Heart left ventricle (tissue), 16 donors: ENCODE measurements at regions of chr9 and their contacts with region 1.

Region 1: DNA sequence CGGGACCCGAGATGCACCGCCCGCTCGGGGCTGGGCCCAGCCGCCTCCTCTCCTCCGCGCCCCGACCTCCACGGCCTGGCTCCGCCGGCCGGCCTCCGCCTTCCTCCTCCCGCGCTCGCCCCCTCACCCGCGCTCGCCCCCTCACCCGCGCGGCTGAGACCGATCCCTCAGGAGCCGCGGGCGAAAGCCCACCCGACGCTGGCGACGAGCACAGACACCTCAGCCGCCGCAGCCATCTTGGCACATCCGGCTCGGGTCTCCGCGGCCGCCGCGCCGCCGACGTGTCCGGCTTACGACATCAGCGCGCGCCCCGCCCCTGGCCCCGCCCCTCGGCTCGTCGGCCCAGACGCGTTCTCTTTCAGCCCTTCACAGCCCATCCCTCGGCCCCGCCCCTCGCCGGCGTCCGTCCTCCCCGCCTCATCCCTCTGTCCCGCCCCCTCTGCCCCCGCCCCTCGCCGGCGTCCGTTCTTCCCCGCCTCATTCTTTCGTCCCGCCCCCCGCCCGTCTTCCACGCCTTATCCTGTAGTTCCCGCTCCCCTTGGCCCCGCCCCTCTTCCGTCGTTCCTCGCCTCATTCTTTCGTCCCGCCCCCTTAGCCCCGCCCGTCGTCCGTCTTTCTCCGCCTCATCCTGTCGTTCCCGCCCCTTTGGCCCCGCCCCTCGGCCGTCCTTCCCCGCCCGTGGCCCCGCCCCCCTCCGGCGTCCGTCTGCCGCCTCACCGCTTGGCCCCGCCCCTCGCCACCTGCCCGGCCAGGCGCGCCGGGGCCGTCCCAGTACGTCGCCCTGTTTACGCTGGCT is at the start of gene SEC16A:
- DNase-seq: peak; percentile 99 to 100 (median 100)
- ATAC-seq: peak; percentile 83 to 92 (median 86)
- H3K4me3 ChIP-seq: peak within 1 kb of the TSS; percentile 72 to 100 (median 94)
- H3K27ac ChIP-seq: peak within 1 kb of the TSS; percentile 92 to 100 (median 99)
- H3K4me1 ChIP-seq: peaks cover 13 to 36% (median 26%) of the 10 kb centered on the region in 12 donors
- H3K27me3 ChIP-seq: no peaks in the 10 kb centered on the region
- CTCF ChIP-seq: no peak
- POLR2A ChIP-seq: peak; percentile 80 to 82
- total RNA-seq, gene SEC16A: 21.1 to 53.3 (median 30.2) TPM

Region 2: DNA sequence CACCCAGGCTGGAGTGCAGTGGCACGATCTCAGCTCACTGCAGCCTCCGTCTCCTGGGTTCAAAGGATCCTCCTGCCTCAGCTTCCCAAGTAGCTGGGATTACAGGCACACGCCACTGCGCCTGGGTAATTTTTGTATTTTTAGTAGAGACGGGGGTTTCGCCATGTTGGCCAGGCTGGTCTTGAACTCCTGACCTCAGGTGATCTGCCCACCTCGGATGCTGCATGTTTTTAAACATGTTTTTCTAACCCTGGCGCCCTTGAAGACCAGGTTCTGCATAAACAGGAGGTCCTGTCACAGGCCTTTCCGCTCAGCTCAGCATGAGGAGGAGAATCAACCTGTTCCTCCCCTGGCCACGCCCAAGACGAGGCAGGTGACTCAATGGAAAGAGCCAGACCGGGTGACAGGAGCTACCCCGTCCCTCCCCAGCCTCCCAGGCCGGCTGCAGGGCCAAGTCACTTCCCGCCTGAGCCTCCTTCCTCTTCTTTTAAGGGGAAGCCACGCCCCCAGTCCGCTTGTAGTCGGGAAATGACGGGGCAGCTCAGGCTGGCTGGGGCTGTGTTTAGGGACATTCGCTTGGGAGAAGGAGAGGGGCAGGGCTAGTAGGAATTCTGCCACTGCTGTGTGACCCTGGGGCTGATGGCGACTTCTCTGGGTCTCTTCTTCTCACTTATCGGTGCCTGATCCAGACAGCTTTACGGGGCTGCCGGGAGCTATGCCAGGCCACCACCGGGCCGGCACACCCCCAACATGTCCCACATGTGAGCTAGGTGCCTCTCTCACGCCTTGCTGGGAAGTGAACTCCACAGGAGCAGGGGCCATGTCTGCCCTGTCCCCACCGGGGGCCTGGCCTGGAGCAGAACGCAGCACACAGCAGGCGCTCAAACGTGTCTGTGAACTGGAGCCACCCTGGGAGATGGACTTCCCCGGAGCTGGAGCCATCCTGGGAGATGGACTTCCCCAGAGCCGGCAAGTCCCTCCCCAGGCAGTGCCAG is 56.7 kb after region 1 on chr9:
- intact Hi-C with region 1: loop called in 7 of 10 experiments (anchors 5 to 10 kb)
- DNase-seq: peak; percentile 94 to 96 (median 94)
- ATAC-seq: peak; percentile 77 to 89 (median 82)
- H3K4me3 ChIP-seq: peak overlapping the region in 9 of 12 donors; percentile 27 to 51 (median 41)
- H3K27ac ChIP-seq: peak overlapping the region; percentile 66 to 97 (median 86)
- H3K4me1 ChIP-seq: peaks cover 26 to 94% (median 77%) of the 10 kb centered on the region in 12 donors
- H3K27me3 ChIP-seq: no peaks in the 10 kb centered on the region
- CTCF ChIP-seq: no peak
- POLR2A ChIP-seq: peak in 1 of 2 donors; percentile 55

Region 3: DNA sequence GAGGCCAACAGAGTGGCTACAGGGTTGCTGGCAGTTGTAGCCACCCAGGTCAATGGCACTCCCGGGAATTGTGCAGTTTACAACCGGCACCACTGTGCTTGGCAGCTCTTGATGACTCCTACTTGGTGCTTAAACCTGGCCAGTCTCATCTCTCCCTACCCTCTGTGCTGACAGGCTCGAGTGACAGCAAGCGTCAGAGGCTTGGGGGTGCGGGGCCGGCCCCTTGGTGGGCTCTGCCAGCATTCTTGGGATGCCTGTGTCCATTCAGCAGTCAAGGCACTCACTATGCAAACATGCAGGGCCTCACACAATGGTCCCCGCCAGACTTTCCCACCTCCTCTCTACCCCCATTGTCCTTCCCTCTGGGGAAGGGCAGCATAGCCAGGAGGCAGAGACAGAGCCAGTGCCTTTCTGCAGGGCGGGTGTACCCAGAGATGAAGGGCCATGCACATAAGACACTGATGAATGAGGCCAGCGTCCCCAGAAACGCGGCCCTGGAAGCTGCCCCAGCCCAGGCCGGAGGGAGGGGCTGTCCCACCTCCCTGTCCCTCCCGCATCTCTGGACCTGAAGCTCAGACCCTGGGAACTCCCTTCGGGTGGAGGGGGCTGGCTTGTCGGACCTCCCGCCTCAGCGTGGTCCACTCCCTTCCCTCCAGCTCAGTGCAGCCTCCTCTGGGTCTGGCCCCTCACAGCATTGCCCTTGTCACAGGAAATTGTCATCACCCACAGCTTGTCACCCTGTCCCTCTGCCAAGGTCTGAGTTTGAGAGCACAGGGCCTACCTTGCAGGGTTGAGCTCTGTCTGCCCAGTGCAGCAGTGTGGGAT is 89.2 kb after region 1 on chr9:
- intact Hi-C with region 1: loop called in 1 of 10 experiments (anchors 1 kb)
- DNase-seq: peak; percentile 71 to 89 (median 83)
- ATAC-seq: peak; percentile 80 to 87 (median 84)
- H3K4me3 ChIP-seq: no peak overlapping the region
- H3K27ac ChIP-seq: peak overlapping the region; percentile 14 to 96 (median 74)
- H3K4me1 ChIP-seq: peaks cover 22 to 73% (median 50%) of the 10 kb centered on the region in 12 donors
- H3K27me3 ChIP-seq: no peaks in the 10 kb centered on the region
- CTCF ChIP-seq: no peak
- POLR2A ChIP-seq: no peak

Region 4: DNA sequence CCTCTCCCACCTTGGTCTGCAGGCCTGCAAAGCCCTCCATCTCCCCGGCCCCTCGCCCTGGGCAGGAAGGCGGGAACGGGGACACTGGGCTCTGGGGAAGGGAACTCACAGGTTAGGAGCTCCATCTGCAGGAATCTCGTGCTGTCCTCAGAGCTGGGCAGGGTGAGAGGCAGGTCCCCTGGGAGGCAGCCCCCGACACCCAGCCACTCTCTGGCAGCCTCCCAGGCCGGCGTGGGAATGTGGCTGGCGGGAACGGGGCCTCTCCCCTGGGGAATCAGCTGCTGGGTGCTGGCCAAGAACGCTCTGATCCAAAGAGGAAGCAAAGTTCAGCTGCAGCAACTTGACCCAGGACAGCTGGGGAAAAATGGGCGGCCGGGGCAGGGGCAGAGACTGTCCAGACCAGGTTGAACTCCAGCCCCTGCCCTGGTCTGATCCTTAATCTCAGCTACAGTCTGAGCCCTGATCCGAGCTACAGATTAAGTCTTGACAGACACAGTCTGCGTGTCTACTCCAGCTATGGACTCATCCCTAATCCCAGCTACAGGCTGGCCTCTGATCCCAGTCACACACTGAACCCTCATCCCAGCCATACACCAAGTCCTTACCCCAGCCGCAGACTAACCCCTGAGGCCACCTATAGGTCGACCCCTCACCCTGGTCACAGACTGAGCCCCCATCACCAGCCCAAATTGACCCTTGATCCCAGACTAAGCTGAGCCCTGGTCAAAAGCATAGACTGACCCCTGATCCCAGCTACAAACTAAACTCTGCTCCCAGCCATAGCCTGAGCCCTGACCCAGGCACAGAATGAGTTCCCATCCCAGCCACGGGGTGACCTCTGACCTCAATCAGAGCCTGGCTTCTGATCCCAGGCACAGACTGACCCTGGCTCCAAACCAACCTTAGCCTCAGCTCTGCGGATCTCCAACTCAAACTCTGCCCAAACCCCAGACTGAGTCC is 142.4 kb after region 1 on chr9:
- intact Hi-C with region 1: loop called in 6 of 10 experiments (anchors 1 to 2 kb)
- DNase-seq: peak; percentile 90 to 93 (median 91)
- ATAC-seq: peak; percentile 75 to 88 (median 83)
- H3K4me3 ChIP-seq: no peak overlapping the region
- H3K27ac ChIP-seq: peak overlapping the region in 11 of 12 donors; percentile 26 to 75 (median 54)
- H3K4me1 ChIP-seq: peaks cover 8 to 49% (median 36%) of the 10 kb centered on the region in 12 donors
- H3K27me3 ChIP-seq: no peaks in the 10 kb centered on the region
- CTCF ChIP-seq: peak; percentile 30 to 81 (median 63)
- POLR2A ChIP-seq: no peak

Region 5: DNA sequence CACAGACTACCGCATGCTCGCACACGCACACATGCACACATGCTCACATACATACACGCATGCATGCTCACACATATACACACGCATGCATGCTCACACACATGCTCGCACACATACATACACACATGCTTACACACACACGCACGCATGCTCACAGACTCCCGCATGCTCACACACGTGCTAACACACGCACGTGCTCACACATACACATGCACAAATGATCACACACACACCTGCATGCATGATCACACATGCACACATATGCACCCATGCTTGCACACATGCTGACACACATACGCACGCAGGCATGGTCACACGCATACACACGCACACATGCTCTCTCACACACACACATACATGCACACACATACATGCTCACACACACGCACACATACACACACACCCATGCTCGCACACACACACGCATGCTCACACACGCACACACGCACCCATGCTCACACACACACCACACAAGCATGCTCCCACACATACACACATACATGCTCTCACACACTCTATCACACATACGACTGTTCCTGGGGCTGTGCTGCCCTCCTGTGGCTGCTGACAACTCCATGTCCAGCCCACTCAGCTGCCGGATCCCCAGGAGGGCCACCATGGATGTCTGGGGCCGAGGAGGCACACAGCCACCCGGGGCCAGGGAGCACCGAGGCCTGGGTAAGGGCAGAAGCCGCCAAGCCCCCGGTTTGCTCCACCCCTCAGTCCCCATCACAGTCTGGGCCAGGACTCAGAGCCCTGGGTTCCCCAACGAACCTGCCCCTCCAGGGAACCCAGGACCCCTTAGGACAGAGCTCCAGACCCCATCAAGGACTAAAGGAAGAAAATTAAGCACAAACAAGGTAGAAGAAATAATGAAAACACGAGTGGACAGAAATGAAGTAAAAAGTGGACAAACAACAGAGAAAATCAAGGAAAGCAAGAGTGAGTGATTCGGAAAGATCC is 148.3 kb after region 1 on chr9:
- intact Hi-C with region 1: loop called (anchors 1 to 2 kb)
- DNase-seq: peak; percentile 79 to 92 (median 80)
- ATAC-seq: peak; percentile 80 to 96 (median 92)
- H3K4me3 ChIP-seq: no peak overlapping the region
- H3K27ac ChIP-seq: no peak overlapping the region
- H3K4me1 ChIP-seq: peaks cover 0 to 28% (median 12%) of the 10 kb centered on the region in 12 donors
- H3K27me3 ChIP-seq: peaks cover 0 to 3% (median 0%) of the 10 kb centered on the region in 9 donors
- CTCF ChIP-seq: peak; percentile 71 to 89 (median 82)
- POLR2A ChIP-seq: no peak

Region 6: DNA sequence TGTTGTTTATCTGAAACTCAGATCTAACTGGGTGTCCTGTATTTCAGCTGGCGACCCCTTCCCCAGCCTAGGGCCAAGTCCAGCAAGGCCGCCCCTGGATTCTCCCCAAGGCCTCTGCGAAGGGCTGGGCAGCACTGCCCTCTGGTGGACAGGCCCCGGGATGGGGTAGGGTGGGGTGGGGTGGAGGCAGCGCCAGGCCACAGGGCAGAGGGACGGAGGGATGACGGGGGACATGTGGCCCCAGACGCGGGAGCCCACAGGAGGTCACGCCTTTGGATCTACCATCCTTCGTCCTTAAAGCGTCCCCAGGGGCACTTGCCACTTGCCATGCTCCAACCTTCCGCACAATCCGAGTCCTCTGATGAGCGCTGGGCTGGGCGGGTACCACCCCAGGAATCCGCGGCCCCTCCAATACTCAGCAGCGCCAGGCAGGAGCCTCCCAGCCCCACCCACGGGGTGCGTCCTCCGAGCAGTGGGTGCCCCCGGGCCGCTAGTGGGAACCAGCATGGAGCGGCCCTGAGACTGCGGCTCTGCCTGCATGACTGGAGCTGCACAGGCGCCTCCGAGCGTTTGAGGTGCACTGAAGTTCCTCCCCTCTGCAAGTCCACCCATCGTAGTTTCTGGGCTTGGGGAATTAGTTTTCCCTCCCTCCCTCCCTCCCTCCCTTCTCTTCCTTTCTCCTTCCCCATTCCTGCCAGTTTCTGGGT is 211.4 kb after region 1 on chr9:
- intact Hi-C with region 1: loop called in 9 of 10 experiments (anchors 2 to 10 kb)
- DNase-seq: peak in 2 of 5 donors; percentile 64 to 77
- ATAC-seq: peak in 3 of 4 donors; percentile 43 to 57 (median 50)
- H3K4me3 ChIP-seq: no peak overlapping the region
- H3K27ac ChIP-seq: no peak overlapping the region
- H3K4me1 ChIP-seq: peaks cover 3 to 51% (median 30%) of the 10 kb centered on the region in 12 donors
- H3K27me3 ChIP-seq: no peaks in the 10 kb centered on the region
- CTCF ChIP-seq: peak; percentile 60 to 81 (median 73)
- POLR2A ChIP-seq: no peak